Endothelial cell of umbilical vein (primary cell): ENCODE measurements at regions of chr21 and their contacts with region 1.

Region 1: GRCh38 chr21:27213303-27213702 is 246.4 kb upstream of the ADAMTS5 start:
- DNase-seq: no peak
- H3K4me3 ChIP-seq: no peak overlapping the region
- H3K27ac ChIP-seq: no peak overlapping the region
- H3K4me1 ChIP-seq: no peaks in the 10 kb centered on the region
- H3K27me3 ChIP-seq: no peaks in the 10 kb centered on the region
- CTCF ChIP-seq: no peak
- POLR2A ChIP-seq: no peak

Region 2: DNA sequence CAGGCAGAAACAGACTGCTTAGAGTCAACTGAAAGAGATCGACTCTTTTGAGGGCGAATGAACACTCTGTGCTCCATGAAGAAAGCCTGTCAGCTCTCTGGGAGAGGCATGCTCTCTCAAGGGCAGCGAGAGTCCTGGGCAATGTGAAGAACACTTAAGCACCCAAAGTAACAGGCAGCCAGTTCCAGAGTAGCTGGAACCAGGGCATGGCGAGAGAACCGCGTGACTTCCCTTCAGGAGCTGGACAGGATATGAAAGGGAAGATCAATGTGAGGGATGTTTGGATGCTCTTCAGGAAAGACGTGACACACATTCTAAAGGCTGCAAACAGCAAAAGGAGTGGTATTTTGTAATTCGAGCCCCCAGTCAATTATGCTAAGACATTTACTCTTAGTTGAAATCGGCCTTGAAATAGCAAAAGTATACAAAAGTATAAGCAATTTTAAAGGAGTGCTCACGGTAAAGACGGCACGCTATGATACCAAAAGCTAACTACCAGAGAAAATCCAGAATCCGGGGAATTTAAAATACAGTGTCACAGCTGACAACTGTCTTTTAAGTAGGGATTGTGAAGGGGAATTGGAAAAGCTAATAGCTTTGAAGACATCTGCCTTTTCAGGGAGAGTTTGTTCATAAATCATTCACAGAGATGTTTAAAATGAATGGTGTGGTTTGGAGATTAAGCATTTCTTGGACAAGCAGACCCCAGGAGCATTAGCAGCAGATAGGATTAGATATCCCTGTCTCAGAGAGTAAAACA is 267.2 kb before region 1 on chr21:
- CTCF ChIA-PET with region 1: no interaction called
- POLR2A ChIA-PET with region 1: no interaction called
- dilution Hi-C with region 1: no loop called
- intact Hi-C with region 1: no loop called
- DNase-seq: no peak
- H3K4me3 ChIP-seq: no peak overlapping the region
- H3K27ac ChIP-seq: no peak overlapping the region
- H3K4me1 ChIP-seq: no peaks in the 10 kb centered on the region
- H3K27me3 ChIP-seq: no peaks in the 10 kb centered on the region
- CTCF ChIP-seq: no peak
- POLR2A ChIP-seq: no peak

Region 3: DNA sequence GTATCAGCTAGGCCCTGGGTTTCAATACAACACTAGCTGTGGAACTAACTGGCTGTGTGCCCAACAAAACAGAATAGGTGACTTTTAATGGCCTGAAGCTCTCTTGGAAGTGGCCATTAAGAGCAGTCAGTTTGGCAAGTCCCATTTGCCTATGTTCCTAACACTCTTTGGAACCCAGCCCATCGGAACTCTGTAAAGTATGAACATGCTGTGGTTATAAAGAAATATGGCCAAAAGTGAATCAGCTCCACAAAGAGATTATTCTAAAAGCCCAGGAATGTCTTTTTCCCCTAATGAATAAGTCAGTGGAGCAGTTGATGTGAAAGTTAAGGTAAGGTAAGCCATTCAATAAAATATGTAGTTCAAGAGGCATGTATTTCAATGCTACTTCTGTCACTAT is 22.7 kb before region 1 on chr21:
- CTCF ChIA-PET with region 1: no interaction called
- POLR2A ChIA-PET with region 1: no interaction called
- dilution Hi-C with region 1: no loop called
- intact Hi-C with region 1: no loop called
- DNase-seq: no peak
- H3K4me3 ChIP-seq: no peak overlapping the region
- H3K27ac ChIP-seq: no peak overlapping the region
- H3K4me1 ChIP-seq: no peaks in the 10 kb centered on the region
- H3K27me3 ChIP-seq: no peaks in the 10 kb centered on the region
- CTCF ChIP-seq: no peak
- POLR2A ChIP-seq: no peak

Region 4: GRCh38 chr21:28852706-28853105 is 1639.4 kb after region 1 on chr21:
- CTCF ChIA-PET with region 1: no interaction called
- POLR2A ChIA-PET with region 1: no interaction called
- dilution Hi-C with region 1: no loop called
- intact Hi-C with region 1: loop called (anchors 10 kb)
- DNase-seq: no peak
- H3K4me3 ChIP-seq: no peak overlapping the region
- H3K27ac ChIP-seq: no peak overlapping the region
- H3K4me1 ChIP-seq: no peaks in the 10 kb centered on the region
- H3K27me3 ChIP-seq: no peaks in the 10 kb centered on the region
- CTCF ChIP-seq: no peak
- POLR2A ChIP-seq: no peak